Sigmoid colon (tissue), 7 donors: ENCODE measurements at regions of chr1 and their contacts with region 1.

Region 1: DNA sequence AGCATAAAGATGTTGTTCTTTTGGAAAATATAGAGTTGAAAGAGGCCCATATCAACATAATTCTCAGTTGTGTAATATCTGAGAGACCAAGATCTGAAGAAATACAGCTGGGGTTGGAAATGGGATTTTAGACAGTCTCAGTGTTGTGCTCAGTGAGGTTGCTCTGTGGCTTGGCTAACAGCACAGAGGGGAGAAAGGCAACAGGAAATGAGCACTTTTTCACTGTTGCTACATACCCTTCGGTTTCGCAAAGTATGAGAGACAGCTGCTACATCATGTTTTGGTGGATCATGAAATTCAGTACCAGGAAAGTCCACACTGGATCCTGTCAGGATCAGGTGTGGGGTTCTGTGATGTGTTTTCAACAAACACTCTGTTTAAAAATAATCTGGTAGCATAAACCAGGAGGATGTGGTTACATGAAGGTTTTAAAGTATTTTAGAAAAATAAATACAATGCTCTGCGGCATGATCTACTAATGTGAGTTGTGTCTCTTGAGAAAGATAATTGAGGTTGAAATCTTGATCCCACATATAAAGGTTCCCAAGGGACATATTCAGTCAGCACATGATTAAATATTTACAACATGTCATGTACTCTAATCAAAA is 7.0 kb upstream of the GPR88 start:
- DNase-seq: peak; percentile 81
- H3K4me3 ChIP-seq: no peak overlapping the region
- H3K27ac ChIP-seq: peak overlapping the region; percentile 27 to 60 (median 50)
- H3K4me1 ChIP-seq: peaks cover 0 to 5% (median 0%) of the 10 kb centered on the region in 4 donors
- H3K27me3 ChIP-seq: no peaks in the 10 kb centered on the region
- CTCF ChIP-seq: no peak
- EP300 ChIP-seq: peak in 1 of 4 donors; percentile 32
- POLR2A ChIP-seq: no peak

Region 2: DNA sequence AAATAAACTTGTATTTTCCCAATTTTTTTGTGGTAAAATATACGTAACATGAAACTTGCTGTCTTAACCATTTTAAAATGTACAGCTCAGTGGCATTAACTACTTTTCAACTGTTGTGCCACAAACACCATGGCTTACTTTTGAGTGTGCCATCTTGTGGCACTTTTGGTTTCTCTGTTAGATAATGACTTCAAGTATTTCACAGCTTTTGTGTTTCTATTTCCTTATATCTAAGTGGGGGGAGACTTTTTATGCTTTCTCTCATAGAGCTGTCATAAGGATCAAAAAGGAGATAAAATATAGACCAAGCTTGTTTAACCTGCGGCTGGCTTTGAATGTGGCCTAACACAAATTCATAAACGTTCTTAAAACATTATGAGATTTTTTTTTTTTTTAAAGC is 134.3 kb before region 1 on chr1:
- intact Hi-C with region 1: no loop called
- DNase-seq: no peak
- H3K4me3 ChIP-seq: no peak overlapping the region
- H3K27ac ChIP-seq: no peak overlapping the region
- H3K4me1 ChIP-seq: no peaks in the 10 kb centered on the region
- H3K27me3 ChIP-seq: no peaks in the 10 kb centered on the region
- CTCF ChIP-seq: no peak
- EP300 ChIP-seq: no peak
- POLR2A ChIP-seq: no peak

Region 3: GRCh38 chr1:100721536-100722207 is 190.7 kb after region 1 on chr1:
- intact Hi-C with region 1: loop called (anchors 10 kb)
- DNase-seq: peak; percentile 80
- H3K4me3 ChIP-seq: peak overlapping the region; percentile 3 to 32 (median 28)
- H3K27ac ChIP-seq: peak overlapping the region; percentile 35 to 44 (median 36)
- H3K4me1 ChIP-seq: peaks cover 0 to 39% (median 14%) of the 10 kb centered on the region in 4 donors
- H3K27me3 ChIP-seq: no peaks in the 10 kb centered on the region
- CTCF ChIP-seq: no peak
- EP300 ChIP-seq: no peak
- POLR2A ChIP-seq: no peak